ENCODE measurements at regions of chr5 and their contacts with region 1.

Region 1: DNA sequence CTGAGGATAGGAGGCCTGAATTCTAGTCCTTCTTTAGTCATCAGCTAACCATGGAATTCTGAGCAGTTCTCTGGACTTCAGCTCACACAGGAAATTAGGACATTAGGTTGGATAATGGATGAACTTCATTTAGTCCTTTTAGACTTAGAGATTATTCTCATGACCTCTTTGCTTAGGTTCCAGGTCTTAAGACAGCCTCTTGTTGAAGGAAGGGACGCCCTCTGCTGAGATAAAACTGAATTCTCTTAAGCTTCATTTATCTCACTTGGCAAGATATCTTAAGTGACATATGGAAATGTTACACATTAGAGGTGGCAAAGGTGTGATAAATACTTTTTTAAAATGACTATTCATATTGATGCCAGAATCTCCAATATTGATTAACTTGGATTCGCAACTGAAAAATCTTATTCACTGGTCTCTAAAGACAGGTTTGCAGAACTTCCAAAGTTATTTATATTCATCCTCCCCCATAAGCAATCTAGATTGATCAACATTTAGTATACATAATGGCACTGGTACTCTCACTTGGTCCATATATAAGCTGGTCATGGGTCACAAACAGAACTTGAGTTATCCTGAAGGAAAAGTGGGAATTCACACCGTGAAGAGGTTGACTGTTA is 16.9 kb upstream of the ZNF366 start:
- DNase-seq: no peak

Region 2: GRCh38 chr5:72366324-72366976 is 157.6 kb before region 1 on chr5:
- intact Hi-C with region 1: loop called (anchors 1 kb)
- DNase-seq: peak in 6 of 10 donors; percentile 29 to 87 (median 46)

Measured in posterior cingulate gyrus (tissue), 11 donors.